ENCODE measurements at regions of chr6 and their contacts with region 1.

Region 1: GRCh38 chr6:42879372-42880239 is at the start of gene RPL7L1:
- DNase-seq: peak; percentile 83 to 86
- H3K4me3 ChIP-seq: peak within 1 kb of the TSS; percentile 24 to 91 (median 47)
- H3K27ac ChIP-seq: peak within 1 kb of the TSS; percentile 94 to 97 (median 96)
- H3K4me1 ChIP-seq: peaks cover 6 to 21% of the 10 kb centered on the region in 2 donors
- H3K27me3 ChIP-seq: no peaks in the 10 kb centered on the region
- CTCF ChIP-seq: peak in 3 of 6 experiments; percentile 21 to 33 (median 23)
- POLR2A ChIP-seq: peak; percentile 1 to 72
- total RNA-seq, gene RPL7L1: 99.1 to 121 (median 103) TPM

Region 2: DNA sequence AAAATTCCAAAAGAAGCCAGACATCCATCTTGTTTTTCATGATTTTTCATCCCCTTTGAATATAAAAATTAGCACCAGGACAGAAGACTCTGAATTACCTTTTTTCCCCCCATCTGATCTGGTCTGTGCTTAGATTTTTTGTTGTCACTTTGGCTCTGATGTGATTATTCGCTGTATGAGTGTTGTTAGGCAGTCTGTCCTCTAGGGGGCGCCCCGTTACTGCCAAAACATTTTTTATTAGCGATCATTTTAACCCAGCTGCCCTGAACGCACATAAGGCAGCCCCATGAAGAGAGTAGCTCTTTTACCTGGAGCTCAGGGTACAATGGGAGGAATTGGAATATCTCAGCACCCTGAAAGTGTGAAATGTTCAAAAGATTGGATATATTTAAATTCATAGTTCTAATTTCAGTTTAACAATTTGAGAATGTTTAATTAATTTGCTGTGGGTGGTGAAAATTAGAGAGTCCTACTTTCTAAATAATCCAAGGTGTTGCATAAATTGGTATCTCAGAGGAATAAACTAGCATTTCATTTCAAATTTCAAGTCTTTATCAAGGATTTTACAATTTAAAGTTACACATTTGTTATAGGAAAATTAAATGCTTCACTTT is 218.0 kb before region 1 on chr6:
- intact Hi-C with region 1: loop called (anchors 5 kb)
- DNase-seq: peak; percentile 84 to 89
- H3K4me3 ChIP-seq: no peak overlapping the region
- H3K27ac ChIP-seq: peak overlapping the region in 1 of 3 donors; percentile 29
- H3K4me1 ChIP-seq: peaks cover 0 to 4% of the 10 kb centered on the region in 2 donors
- H3K27me3 ChIP-seq: no peaks in the 10 kb centered on the region
- CTCF ChIP-seq: peak; percentile 51 to 97 (median 88)
- POLR2A ChIP-seq: no peak

Region 3: DNA sequence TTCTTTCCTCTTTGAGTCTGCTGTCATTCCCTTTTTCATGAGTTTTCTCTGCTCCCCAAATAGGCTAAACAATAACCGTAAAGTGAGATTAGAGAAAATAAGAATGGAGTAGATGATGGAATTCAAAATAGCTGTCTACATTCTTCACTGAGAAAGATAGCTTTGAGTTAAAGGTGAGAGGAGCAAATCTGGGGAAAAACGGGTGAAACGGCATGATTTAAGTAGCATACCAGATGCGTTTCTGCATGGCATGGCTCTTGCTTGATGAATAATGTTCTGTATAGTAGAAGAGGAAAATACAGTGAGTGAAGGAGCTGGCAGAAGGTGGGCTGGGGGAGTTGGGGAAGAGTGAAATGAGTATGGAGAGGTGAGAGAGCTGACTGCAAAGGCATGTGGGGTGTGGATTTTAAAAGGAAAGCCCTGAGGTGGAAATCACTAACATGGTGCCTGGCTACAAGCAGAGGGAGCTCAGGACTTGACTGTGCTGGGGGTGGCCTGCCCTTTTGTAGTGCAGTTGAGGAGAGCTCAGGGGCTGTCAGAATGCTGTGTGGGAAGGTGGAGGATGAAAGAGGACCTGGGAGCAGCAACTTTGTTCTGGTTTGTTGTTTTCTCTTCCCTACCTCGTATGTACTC is 88.9 kb before region 1 on chr6:
- intact Hi-C with region 1: no loop called
- DNase-seq: no peak
- H3K4me3 ChIP-seq: no peak overlapping the region
- H3K27ac ChIP-seq: peak overlapping the region; percentile 25 to 100 (median 70)
- H3K4me1 ChIP-seq: peaks cover 44 to 51% of the 10 kb centered on the region in 2 donors
- H3K27me3 ChIP-seq: no peaks in the 10 kb centered on the region
- CTCF ChIP-seq: no peak
- POLR2A ChIP-seq: no peak

Region 4: DNA sequence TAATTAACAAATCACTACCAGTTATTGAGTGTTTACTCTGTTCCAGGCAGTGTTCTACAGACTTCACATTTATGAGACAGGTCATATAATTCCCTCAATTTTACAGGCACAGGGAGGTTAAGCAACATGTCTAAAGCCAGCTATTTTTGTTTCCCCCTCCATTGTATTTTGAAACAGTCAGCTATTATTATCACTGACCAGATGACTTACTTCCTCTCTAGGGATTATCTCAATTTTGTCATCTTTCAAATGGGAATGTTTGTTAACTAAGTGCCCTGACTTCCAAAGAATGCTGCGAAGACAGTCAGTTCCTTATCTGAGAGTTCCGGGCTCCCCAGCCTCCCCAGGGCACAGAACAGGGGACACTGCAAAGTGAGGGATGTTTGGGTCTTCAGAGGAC is 44.1 kb after region 1 on chr6:
- intact Hi-C with region 1: no loop called
- DNase-seq: no peak
- H3K4me3 ChIP-seq: no peak overlapping the region
- H3K27ac ChIP-seq: no peak overlapping the region
- H3K4me1 ChIP-seq: peaks cover 5 to 6% of the 10 kb centered on the region in 2 donors
- H3K27me3 ChIP-seq: peaks cover 3% of the 10 kb centered on the region
- CTCF ChIP-seq: no peak
- POLR2A ChIP-seq: no peak

Measured in thyroid gland (tissue), 4 donors.